A549 (cell line): ENCODE measurements at regions of chr14 and their contacts with region 1.

Region 1: GRCh38 chr14:106844608-106845285 is 1318.4 kb downstream of the TMEM121 start:
- DNase-seq: peak; percentile 53 to 58
- ATAC-seq: peak; percentile 68 to 75
- H3K4me3 ChIP-seq: peak overlapping the region; percentile 64
- H3K27ac ChIP-seq: peak overlapping the region; percentile 78 to 88
- H3K4me1 ChIP-seq: peaks cover 35% of the 10 kb centered on the region; the same call in 2 of the 3 replicates
- CTCF ChIP-seq: no peak
- EP300 ChIP-seq: no peak
- POLR2A ChIP-seq: peak; percentile 48
- RAD21 ChIP-seq: no peak

Region 2: GRCh38 chr14:106511006-106511799 is 333.5 kb before region 1 on chr14:
- CTCF ChIA-PET with region 1: no interaction called
- POLR2A ChIA-PET with region 1: no interaction called
- DNase-seq: no peak
- ATAC-seq: no peak
- H3K4me3 ChIP-seq: no peak overlapping the region
- H3K27ac ChIP-seq: no peak overlapping the region
- H3K4me1 ChIP-seq: no peaks in the 10 kb centered on the region
- CTCF ChIP-seq: no peak
- EP300 ChIP-seq: no peak
- POLR2A ChIP-seq: no peak
- RAD21 ChIP-seq: no peak

Region 3: GRCh38 chr14:106691601-106692291 is 153.0 kb before region 1 on chr14:
- CTCF ChIA-PET with region 1: no interaction called
- POLR2A ChIA-PET with region 1: no interaction called
- DNase-seq: peak in 1 of 2 experiments; percentile 50
- ATAC-seq: no peak
- H3K4me3 ChIP-seq: no peak overlapping the region
- H3K27ac ChIP-seq: no peak overlapping the region
- H3K4me1 ChIP-seq: no peaks in the 10 kb centered on the region
- CTCF ChIP-seq: no peak
- EP300 ChIP-seq: no peak
- POLR2A ChIP-seq: no peak
- RAD21 ChIP-seq: no peak

Region 4: GRCh38 chr14:106831322-106831720 is 13.4 kb before region 1 on chr14:
- CTCF ChIA-PET with region 1: interaction called, 21 read pairs
- POLR2A ChIA-PET with region 1: no interaction called
- DNase-seq: peak in 1 of 2 experiments; percentile 75
- ATAC-seq: peak; percentile 50 to 61; a peak in 4 of 6 replicates
- H3K4me3 ChIP-seq: no peak overlapping the region
- H3K27ac ChIP-seq: no peak overlapping the region
- H3K4me1 ChIP-seq: no peaks in the 10 kb centered on the region
- CTCF ChIP-seq: no peak; the same call in 2 of the 3 replicates
- EP300 ChIP-seq: no peak
- POLR2A ChIP-seq: no peak
- RAD21 ChIP-seq: no peak

Region 5: DNA sequence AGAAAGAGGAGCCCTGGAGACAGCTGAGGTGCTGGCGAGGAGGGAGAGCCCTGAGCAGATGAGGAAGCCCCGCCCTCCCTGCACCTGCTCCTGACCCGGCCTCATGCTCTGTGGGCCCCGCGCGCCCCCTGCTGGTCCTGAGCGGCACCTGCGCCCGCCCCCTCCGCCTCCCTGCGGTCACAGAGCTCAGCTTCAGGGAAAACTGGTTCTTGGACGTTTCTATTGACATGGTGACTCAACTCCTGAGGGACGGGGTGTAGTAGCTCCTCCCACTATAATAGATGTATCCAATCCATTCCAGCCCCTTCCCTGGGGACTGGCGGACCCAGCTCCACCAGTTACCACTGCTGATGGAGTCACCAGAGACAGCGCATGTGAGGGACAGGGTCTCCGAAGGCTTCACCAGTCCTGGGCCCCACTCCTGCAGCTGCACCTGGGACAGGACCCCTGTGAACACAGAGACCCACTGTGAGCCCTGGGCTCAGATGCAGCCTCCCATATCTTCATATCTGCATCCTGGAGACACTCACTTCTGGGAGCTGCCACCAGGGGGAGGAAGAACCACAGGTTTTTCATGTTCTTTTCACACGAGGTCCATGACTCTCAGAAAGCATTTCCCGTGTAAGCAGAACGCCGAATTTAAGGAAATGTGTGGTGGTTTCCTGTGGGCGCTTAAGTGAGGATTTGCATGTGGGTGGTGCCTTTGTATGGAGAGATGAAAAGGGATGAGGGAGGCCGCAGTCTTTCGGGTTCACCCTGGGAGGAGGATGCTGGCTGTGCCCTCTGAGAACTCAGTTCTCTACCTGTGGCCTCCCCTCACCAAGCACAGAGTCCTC is 28.1 kb after region 1 on chr14:
- CTCF ChIA-PET with region 1: interaction called, 15 read pairs
- POLR2A ChIA-PET with region 1: interaction called, 3 read pairs
- DNase-seq: peak; percentile 53 to 83
- ATAC-seq: peak; percentile 93 to 94
- H3K4me3 ChIP-seq: no peak overlapping the region
- H3K27ac ChIP-seq: no peak overlapping the region
- H3K4me1 ChIP-seq: no peaks in the 10 kb centered on the region
- CTCF ChIP-seq: peak; percentile 42
- EP300 ChIP-seq: no peak
- POLR2A ChIP-seq: no peak
- RAD21 ChIP-seq: peak; percentile 54 to 64